ENCODE measurements at regions of chr4 and their contacts with region 1.

Region 1: DNA sequence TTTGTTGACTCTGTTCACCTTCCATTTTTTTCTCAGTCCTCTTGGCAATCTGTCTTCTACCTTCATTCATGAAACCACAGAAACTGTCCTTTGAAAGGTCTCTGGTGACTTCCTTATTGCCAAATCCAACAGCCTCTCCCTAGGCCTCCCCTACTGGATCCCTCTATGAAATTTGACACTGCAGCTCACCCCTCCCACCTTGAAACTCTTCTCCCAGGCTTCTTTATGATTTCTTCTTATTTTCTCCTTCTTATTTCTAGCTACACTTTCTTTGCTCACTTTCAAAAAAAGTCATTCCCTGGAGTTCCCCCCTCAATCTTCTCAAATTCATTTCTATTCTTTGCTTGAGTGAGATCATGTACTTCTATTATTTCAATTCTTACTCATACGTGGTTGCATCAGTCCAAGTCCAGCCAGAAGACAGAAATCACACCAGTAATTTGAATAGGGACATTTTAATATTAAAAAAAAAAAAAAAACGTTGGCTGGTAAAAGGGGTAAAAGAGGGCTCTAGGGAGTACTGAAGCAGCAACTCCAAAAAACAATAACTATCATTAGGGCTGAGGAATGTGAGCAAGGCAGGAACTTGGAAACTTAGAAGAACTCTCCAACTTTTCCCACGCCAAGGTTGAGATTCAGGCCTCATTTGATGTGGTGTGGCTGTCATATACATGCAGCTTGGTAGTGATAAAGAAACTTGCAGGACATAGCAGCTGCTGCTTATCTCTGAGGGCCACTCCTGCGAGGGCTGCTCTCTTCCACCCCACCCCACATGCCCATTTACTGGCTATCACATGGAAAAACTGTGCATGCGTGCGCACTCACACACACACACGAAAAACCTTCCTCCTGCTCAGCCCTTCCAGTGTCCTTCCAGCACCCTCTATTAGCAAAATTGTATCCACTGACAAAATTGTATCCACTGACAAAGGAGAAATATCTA is 169.8 kb upstream of the GALNT7 start:
- DNase-seq: peak; percentile 87 to 94 (median 92)
- ATAC-seq: peak; percentile 95
- H3K4me3 ChIP-seq: no peak overlapping the region
- H3K27ac ChIP-seq: peak overlapping the region; percentile 63
- H3K4me1 ChIP-seq: peaks cover 0 to 35% of the 10 kb centered on the region in 2 experiments; a peak in 3 of 5 replicates
- H3K27me3 ChIP-seq: no peaks in the 10 kb centered on the region
- CTCF ChIP-seq: no peak; a peak in 1 of 6 replicates
- EP300 ChIP-seq: peak; percentile 95
- POLR2A ChIP-seq: no peak
- RAD21 ChIP-seq: peak; percentile 12 to 32; a peak in 2 of 4 replicates

Region 2: DNA sequence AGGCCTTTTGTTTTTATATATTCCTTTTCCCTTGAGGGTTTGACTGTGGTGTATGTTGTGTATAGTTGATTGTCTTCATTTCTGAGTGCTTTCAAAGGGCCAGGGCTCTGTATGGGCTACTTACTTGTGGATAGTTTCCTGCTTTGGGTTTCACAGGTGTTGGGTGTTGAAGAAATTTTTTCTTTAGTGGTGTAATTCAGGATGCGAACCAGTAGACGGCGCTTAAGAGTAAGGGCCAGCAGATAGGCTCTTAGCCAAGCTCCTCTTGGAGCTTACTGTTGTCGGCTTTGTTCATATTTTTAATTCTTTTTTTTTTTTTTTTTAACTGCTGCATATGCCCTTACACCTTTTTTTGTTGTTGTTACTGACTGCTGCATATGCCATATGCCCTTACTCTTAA is 106.5 kb before region 1 on chr4:
- CTCF ChIA-PET with region 1: no interaction called
- POLR2A ChIA-PET with region 1: no interaction called
- in situ Hi-C with region 1: no loop called
- intact Hi-C with region 1: loop called (anchors 5 kb)
- DNase-seq: peak; percentile 17 to 45 (median 27)
- ATAC-seq: peak; percentile 80
- H3K4me3 ChIP-seq: no peak overlapping the region
- H3K27ac ChIP-seq: no peak overlapping the region
- H3K4me1 ChIP-seq: no peaks in the 10 kb centered on the region
- H3K27me3 ChIP-seq: no peaks in the 10 kb centered on the region
- CTCF ChIP-seq: peak; percentile 56 to 71 (median 70)
- EP300 ChIP-seq: no peak
- POLR2A ChIP-seq: no peak
- RAD21 ChIP-seq: peak; percentile 8 to 60; a peak in 2 of 4 replicates

Region 3: GRCh38 chr4:172957216-172957615 is 41.6 kb before region 1 on chr4:
- CTCF ChIA-PET with region 1: no interaction called
- POLR2A ChIA-PET with region 1: no interaction called
- in situ Hi-C with region 1: no loop called
- intact Hi-C with region 1: loop called (anchors 2 kb)
- DNase-seq: peak in 1 of 4 experiments; percentile 37
- ATAC-seq: peak; percentile 56; the same call in 1 of the 3 replicates
- H3K4me3 ChIP-seq: no peak overlapping the region
- H3K27ac ChIP-seq: peak overlapping the region; percentile 43; the same call in 1 of the 3 replicates
- H3K4me1 ChIP-seq: peaks cover 0 to 14% of the 10 kb centered on the region in 2 experiments; a peak in 3 of 5 replicates
- H3K27me3 ChIP-seq: no peaks in the 10 kb centered on the region; a peak in 1 of 5 replicates
- CTCF ChIP-seq: no peak
- EP300 ChIP-seq: no peak
- POLR2A ChIP-seq: no peak
- RAD21 ChIP-seq: no peak

Region 4: GRCh38 chr4:173111031-173111430 is 112.2 kb after region 1 on chr4:
- CTCF ChIA-PET with region 1: no interaction called
- POLR2A ChIA-PET with region 1: no interaction called
- in situ Hi-C with region 1: no loop called
- intact Hi-C with region 1: no loop called
- DNase-seq: no peak
- ATAC-seq: no peak
- H3K4me3 ChIP-seq: no peak overlapping the region
- H3K27ac ChIP-seq: no peak overlapping the region
- H3K4me1 ChIP-seq: peaks cover 0 to 2% of the 10 kb centered on the region in 2 experiments; a peak in 1 of 5 replicates
- H3K27me3 ChIP-seq: no peaks in the 10 kb centered on the region
- CTCF ChIP-seq: no peak
- EP300 ChIP-seq: no peak
- POLR2A ChIP-seq: no peak
- RAD21 ChIP-seq: no peak